SK-N-SH (cell line): ENCODE measurements at regions of chr6 and their contacts with region 1.

Region 1: DNA sequence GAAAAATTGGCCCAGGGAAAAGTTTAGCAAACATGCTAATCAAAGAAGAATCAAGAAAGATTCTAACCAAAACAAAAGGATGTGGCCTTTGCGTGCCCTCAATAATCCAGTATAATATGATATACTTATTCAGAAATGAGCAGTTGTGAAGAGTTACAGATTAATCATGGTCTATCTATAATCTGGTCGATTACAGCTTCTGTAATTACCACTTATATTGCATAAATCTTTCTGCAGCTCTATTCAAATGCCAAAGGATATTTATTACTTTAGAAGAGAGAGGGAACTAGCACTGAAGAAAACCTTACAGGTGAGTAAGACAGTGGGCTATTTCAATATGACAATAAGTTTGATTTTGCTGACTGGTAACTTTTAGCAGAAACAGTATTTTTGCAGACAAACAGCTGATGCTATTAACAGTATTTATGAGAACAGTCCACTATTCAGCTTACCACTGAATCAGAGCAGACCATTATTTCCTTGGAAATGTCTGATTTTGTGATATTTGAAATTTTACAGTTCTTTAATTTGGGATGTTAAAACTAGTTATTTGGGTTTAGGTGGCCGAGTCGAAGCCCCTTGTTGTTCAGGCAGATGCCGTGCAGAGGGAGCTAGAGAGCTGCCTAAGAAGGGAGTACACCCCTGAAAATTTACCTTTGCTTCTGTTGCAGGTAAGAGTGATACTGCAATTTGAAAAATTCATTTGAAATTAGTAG is 92.2 kb downstream of the CEP57L1 start:
- DNase-seq: peak; percentile 54
- H3K4me3 ChIP-seq: peak overlapping the region in 1 of 2 experiments; percentile 14; a peak in 1 of 4 replicates
- H3K27ac ChIP-seq: no peak overlapping the region
- H3K4me1 ChIP-seq: no peaks in the 10 kb centered on the region
- H3K27me3 ChIP-seq: peaks cover 9% of the 10 kb centered on the region; the same call in 1 of the 2 replicates
- CTCF ChIP-seq: peak; percentile 97
- EP300 ChIP-seq: no peak
- RAD21 ChIP-seq: peak; percentile 96

Region 2: DNA sequence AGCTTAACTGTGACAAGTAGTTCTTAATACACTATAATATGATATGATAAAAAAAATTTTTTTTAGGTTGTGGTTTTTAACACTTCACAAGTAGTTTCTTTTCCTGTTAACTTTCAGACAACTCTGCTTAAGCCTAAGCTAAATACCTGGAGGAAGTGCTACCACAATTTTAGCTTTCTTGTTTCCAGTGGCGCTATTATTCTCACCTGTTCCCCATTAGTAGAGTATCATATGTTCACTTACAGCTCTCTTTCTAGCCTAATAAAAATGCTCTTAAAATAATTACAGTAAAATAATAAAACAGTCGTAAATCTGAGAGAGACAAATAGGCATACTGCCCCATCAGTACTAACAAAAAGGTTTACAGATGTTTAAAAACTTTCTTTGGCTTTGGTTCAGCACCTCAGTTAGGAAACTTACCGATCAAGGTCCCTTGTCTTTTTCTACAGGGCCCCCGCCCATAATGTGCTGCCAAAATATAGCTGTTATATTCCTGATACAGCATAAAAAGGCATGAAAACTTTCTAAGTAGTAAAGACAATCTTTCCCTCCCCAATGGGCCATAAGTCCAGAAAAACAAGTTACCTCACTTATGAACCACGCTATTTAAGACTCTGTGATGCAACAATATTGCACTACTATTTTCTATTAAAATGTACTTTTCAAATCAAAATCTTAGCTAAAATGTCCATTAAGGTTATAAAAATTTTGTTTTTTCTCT is 150.8 kb before region 1 on chr6:
- CTCF ChIA-PET with region 1: no interaction called
- POLR2A ChIA-PET with region 1: no interaction called
- DNase-seq: no peak
- H3K4me3 ChIP-seq: no peak overlapping the region
- H3K27ac ChIP-seq: no peak overlapping the region
- H3K4me1 ChIP-seq: peaks cover 0 to 9% of the 10 kb centered on the region in 2 experiments; a peak in 1 of 4 replicates
- H3K27me3 ChIP-seq: no peaks in the 10 kb centered on the region
- CTCF ChIP-seq: no peak
- EP300 ChIP-seq: no peak
- RAD21 ChIP-seq: no peak

Region 3: GRCh38 chr6:109130065-109130464 is 57.5 kb before region 1 on chr6:
- CTCF ChIA-PET with region 1: no interaction called
- POLR2A ChIA-PET with region 1: no interaction called
- DNase-seq: no peak
- H3K4me3 ChIP-seq: no peak overlapping the region
- H3K27ac ChIP-seq: no peak overlapping the region
- H3K4me1 ChIP-seq: no peaks in the 10 kb centered on the region; a peak in 2 of 4 replicates
- H3K27me3 ChIP-seq: no peaks in the 10 kb centered on the region
- CTCF ChIP-seq: no peak
- EP300 ChIP-seq: no peak
- RAD21 ChIP-seq: no peak

Region 4: DNA sequence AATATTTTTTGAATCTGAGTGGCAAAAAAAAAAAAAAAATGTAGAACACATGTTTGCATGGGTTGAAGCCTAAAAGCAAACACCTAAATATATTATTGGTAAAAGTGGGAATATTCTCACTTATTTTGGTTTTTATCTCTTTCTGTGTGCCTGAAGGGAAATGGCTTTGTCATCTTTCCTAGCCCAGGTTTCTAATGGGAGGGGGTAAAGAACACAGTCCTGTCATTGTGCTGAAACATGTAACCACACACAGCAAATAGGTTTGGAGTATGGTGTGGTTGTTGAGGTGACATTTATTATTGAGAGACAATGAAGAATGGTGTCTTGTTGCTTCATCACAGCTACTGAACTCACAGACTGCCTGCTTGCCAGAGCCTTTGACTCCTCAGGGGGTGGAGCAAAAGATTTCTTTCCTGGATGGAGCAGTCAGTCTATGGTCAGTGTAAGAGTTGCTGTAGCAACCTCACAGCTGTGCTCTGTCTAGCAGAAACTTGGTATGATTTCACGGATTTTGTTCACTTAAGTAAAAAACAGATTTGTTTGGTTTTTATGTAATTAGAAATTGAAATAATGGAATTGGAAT is 22.1 kb before region 1 on chr6:
- CTCF ChIA-PET with region 1: interaction called, 16 read pairs
- POLR2A ChIA-PET with region 1: no interaction called
- DNase-seq: no peak
- H3K4me3 ChIP-seq: no peak overlapping the region
- H3K27ac ChIP-seq: no peak overlapping the region
- H3K4me1 ChIP-seq: no peaks in the 10 kb centered on the region; a peak in 1 of 4 replicates
- H3K27me3 ChIP-seq: no peaks in the 10 kb centered on the region
- CTCF ChIP-seq: no peak
- EP300 ChIP-seq: no peak
- RAD21 ChIP-seq: no peak

Region 5: GRCh38 chr6:109202409-109203284 is 15.1 kb after region 1 on chr6:
- CTCF ChIA-PET with region 1: interaction called, 11 read pairs
- POLR2A ChIA-PET with region 1: no interaction called
- DNase-seq: no peak
- H3K4me3 ChIP-seq: no peak overlapping the region
- H3K27ac ChIP-seq: no peak overlapping the region
- H3K4me1 ChIP-seq: no peaks in the 10 kb centered on the region
- H3K27me3 ChIP-seq: no peaks in the 10 kb centered on the region; the same call in 1 of the 2 replicates
- CTCF ChIP-seq: no peak
- EP300 ChIP-seq: no peak
- RAD21 ChIP-seq: no peak

Region 6: GRCh38 chr6:109348226-109348625 is 160.7 kb after region 1 on chr6:
- CTCF ChIA-PET with region 1: interaction called, 11 read pairs
- POLR2A ChIA-PET with region 1: no interaction called
- DNase-seq: no peak
- H3K4me3 ChIP-seq: no peak overlapping the region
- H3K27ac ChIP-seq: peak overlapping the region in 1 of 2 experiments; percentile 11; a peak in 1 of 4 replicates
- H3K4me1 ChIP-seq: peaks cover 0 to 29% of the 10 kb centered on the region in 2 experiments; a peak in 1 of 4 replicates
- H3K27me3 ChIP-seq: no peaks in the 10 kb centered on the region
- CTCF ChIP-seq: no peak
- EP300 ChIP-seq: no peak
- RAD21 ChIP-seq: no peak

Region 7: DNA sequence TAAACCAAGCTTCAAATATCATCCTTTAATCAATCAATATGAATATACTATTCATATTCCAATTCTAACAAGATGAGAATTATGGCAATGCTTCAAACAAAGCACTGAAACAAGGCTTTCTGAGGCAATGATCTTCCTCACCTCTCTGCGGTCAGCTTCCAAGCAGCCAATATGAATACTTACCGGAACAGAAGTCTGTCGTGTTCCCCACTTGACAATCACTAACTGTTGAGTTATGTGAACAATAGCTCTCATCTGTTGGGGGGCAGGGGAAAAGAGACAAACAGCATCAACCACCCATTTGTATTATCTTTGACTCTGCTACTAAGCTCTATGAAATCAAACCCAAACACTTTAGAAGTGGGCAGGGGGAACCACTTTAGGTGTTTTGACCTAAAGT is 190.2 kb after region 1 on chr6:
- CTCF ChIA-PET with region 1: interaction called, 132 read pairs
- POLR2A ChIA-PET with region 1: interaction called, 10 read pairs
- DNase-seq: no peak
- H3K4me3 ChIP-seq: no peak overlapping the region
- H3K27ac ChIP-seq: no peak overlapping the region
- H3K4me1 ChIP-seq: peaks cover 4 to 6% of the 10 kb centered on the region in 2 experiments; a peak in 2 of 4 replicates
- H3K27me3 ChIP-seq: no peaks in the 10 kb centered on the region
- CTCF ChIP-seq: no peak
- EP300 ChIP-seq: no peak
- RAD21 ChIP-seq: no peak

Region 8: DNA sequence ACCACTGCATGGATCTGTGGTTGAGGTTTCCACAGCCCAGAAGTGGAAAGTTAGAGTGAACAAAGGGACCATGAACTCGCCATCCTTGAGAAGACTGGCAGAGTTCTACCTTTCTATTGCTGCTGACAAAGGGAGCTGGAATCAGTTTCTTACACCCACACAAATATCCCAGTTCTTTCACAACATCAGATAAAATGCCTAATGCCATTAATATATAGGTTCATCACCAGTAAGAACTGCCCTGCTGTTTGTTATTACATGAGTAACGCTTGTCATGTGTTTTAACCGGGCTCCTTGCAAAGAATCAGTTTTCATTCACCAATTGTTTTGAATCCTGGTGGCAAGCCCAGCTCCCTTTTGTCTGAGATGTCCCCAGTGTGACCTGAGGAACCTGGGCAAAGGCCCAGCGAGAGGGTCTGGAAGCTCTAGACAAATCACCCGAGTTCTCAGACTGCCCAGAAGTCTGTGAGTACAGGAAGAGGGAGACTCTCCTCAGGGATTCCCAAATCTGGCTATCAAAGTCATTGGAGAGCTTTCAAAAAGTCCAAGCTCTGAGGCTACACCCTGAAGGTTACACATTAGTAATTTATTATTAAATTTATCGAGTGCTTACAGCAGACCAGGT is 202.2 kb after region 1 on chr6:
- CTCF ChIA-PET with region 1: interaction called, 132 read pairs
- POLR2A ChIA-PET with region 1: interaction called, 3 read pairs
- DNase-seq: no peak
- H3K4me3 ChIP-seq: no peak overlapping the region
- H3K27ac ChIP-seq: no peak overlapping the region
- H3K4me1 ChIP-seq: peaks cover 2 to 7% of the 10 kb centered on the region in 2 experiments; a peak in 2 of 4 replicates
- H3K27me3 ChIP-seq: no peaks in the 10 kb centered on the region
- CTCF ChIP-seq: no peak
- EP300 ChIP-seq: 0 out of 4 replicates have a peak, but pooled peaks of 1 of the 2 experiments have one; percentile 8
- RAD21 ChIP-seq: no peak